ENCODE measurements at regions of chr22 and their contacts with region 1.

Region 1: GRCh38 chr22:33971561-33971961 is 51.3 kb upstream of the LARGE1 start:
- DNase-seq: no peak

Region 2: DNA sequence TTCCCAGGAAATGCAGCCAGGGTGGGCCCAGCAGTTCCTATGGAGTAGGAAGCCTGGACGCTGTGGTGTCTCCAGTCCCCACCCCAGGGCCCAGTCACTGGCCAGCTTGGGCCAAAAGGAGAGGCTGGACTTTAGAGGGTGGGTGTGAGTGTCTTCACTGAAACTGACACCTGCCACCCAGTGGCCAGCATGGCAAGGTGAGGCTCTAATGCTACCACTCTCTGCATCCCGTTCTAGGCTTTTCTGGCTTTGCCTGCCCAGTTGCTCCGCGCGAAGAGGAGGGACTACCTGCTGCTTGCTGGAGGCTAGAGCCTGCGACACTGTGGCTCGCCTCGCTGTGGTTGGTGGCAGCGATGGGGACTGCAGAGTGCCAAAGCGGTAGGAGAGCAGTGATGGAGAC is 1847.9 kb before region 1 on chr22:
- intact Hi-C with region 1: loop called in 1 of 2 experiments (anchors 10 kb)
- DNase-seq: no peak

Region 3: DNA sequence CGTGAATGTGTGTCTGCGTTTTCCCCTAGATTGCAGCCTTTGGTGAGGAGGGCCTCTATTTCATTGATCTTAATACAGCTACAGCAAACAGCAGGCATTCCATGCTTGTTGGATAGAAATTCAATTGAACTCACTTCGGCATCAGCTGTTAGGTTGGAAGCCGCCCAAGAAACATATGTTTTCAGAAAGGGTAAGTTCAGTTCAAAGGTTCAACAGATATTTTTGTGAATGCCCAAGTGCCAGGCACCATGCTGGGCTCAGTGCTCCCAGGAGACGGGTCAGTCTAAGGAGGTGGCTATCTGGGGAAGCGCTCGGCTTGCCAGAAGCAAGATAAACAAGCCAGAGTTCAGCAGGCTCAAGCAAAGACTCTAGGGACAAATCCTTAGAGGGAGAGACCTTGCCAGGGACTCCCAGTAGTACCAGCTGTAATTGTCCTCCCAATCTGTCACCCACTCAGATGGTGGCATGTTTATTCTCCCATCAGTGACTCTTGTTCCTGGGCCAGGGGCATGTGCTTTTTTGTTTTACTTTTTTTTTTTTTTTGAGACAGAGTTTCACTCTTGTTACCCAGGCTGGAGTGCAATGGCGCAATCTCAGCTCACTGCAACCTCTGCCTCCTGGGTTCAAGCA is 13.2 kb after region 1 on chr22:
- intact Hi-C with region 1: no loop called
- DNase-seq: no peak